ENCODE measurements at regions of chr12 and their contacts with region 1.

Region 1: GRCh38 chr12:124727264-124727721 is 136.4 kb downstream of the SCARB1 start:
- DNase-seq: peak; percentile 62 to 67
- ATAC-seq: peak; percentile 62 to 92 (median 84)
- H3K4me3 ChIP-seq: no peak overlapping the region
- H3K27ac ChIP-seq: peak overlapping the region in 9 of 10 donors; percentile 1 to 88 (median 64)
- H3K4me1 ChIP-seq: peaks cover 0 to 50% (median 17%) of the 10 kb centered on the region in 9 donors
- H3K27me3 ChIP-seq: no peaks in the 10 kb centered on the region
- CTCF ChIP-seq: no peak

Region 2: DNA sequence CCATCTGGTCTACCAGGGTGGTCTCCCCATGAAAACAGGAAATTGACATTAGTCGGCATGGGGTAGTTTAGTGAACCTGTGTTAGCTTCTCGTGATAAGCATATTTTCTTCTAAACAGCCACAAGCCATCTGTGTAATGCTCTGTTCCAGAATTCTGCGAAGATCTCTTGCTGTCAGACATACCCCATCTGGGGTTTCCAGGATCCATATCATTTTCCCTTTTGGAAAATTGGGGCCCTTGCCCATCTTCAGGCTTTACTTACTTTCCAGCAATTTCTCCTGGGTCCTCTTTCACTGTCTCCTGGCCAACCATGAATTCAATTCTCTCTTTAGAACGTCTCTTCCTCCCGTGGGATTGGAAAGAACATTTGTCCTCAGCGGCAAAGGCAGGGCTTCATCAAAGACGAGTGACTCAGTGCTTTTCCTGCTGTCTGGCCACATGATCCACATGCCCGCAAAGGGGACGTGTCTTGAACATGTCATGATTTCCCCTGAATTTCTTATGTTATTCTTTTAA is 138.5 kb before region 1 on chr12:
- intact Hi-C with region 1: loop called in 1 of 10 experiments (anchors 10 kb)
- DNase-seq: peak in 1 of 2 donors; percentile 75
- ATAC-seq: peak; percentile 60 to 92 (median 83)
- H3K4me3 ChIP-seq: peak overlapping the region in 1 of 10 donors; percentile 4
- H3K27ac ChIP-seq: peak overlapping the region in 9 of 10 donors; percentile 15 to 82 (median 61)
- H3K4me1 ChIP-seq: peaks cover 6 to 48% (median 9%) of the 10 kb centered on the region in 9 donors
- H3K27me3 ChIP-seq: no peaks in the 10 kb centered on the region
- CTCF ChIP-seq: no peak

Region 3: GRCh38 chr12:125015680-125016310 is 288.5 kb after region 1 on chr12:
- intact Hi-C with region 1: no loop called
- DNase-seq: no peak
- ATAC-seq: no peak
- H3K4me3 ChIP-seq: no peak overlapping the region
- H3K27ac ChIP-seq: no peak overlapping the region
- H3K4me1 ChIP-seq: no peaks in the 10 kb centered on the region
- H3K27me3 ChIP-seq: no peaks in the 10 kb centered on the region
- CTCF ChIP-seq: no peak

Measured in heart right ventricle (tissue), 16 donors.